Posterior cingulate gyrus (tissue), 11 donors: ENCODE measurements at regions of chr7 and their contacts with region 1.

Region 1: GRCh38 chr7:66493235-66494181 is 135.2 kb upstream of the KCTD7 start:
- DNase-seq: peak; percentile 96 to 100 (median 98)

Region 2: DNA sequence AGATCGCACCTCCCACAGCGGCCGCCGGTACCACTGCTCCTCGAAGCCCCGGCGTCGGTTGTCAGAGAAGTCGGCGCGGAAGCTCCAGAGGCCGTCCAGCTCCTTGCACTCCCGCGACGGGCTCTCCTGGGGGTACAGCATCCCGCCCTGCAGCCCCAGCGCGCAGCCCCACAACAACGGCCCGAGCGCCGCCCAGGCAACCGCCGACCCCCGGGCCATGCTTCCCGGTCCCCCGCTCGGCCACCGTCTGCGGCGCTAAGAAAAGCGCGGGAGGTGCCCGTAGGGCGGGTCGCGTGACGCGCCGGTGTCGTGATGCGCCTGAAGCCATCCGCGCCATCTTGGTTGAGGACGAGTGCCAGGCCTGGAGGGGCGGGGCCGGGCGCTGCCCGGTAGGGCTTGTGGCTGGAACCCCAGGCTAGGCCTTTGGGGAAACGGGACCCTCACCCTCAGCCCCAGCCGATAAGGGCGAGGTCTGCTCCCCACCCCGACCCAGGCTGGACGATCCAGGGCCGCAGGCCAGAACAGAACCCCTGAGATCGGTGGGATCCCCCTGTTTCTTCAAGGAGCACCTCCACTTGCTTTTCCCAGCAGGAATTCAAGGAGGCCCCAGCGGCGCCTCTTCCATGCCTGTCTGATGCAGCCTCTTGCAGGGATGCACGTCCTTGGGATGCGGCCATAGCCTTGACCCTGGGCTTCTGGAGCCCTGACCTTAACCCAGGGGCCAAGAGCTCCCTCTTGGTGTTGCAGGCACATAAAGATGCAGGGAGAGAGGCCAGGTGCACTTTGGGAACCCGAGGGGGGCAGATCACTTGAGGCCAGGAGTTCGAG is 511.3 kb before region 1 on chr7 and contains the start of gene GUSB:
- intact Hi-C with region 1: loop called (anchors 5 kb)
- DNase-seq: peak; percentile 88 to 99 (median 95)

Region 3: DNA sequence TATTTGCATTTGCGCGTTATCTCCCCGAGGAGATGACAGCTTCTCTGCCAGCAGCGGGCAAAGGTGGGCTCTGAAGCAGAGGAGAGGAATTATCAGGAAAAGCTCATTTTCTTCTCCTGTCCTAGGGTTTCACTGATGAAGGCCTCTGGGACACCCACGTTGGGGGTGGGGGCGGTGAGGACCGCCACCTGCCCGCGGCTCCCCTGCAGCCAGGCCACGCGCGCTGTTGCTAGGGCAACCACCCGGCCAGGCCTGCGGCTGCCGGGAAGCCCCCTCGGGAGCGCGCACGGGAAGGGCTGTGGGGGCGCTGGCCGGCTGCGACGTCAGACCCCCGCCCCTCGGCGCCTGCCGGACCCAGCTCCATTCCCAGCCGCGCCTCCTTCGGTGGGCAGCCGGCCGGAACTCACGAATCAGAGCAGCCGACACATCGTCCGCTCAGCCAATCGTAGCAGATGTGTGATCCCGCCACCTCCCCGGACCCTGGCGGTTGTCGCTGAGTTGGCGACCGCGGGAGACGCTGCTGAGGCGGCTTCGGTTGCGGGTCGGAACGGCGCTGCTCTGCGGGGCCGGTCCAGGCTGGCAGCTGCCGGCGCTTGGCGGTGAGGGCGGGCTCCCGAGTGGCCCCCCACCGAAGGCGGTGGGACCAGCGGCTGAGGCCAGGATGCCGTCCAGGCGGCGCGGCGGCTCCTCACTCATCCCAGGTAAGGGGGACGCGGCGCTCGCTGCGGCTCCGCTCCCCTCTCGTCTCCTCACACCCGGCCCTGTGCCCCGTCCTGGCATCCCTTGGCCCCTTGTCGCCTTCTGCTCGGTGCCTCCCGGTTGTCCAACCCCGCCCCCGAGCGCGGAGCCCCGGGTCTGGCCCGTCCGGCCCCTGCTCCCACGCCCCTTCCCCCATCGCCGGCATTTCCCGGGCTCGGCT is 288.4 kb before region 1 on chr7 and contains the start of gene TPST1:
- intact Hi-C with region 1: loop called (anchors 10 kb)
- DNase-seq: peak; percentile 91 to 99 (median 94)

Region 4: GRCh38 chr7:66413379-66414114 is 80.0 kb before region 1 on chr7:
- intact Hi-C with region 1: loop called (anchors 5 kb)
- DNase-seq: peak; percentile 72 to 98 (median 90)

Region 5: GRCh38 chr7:66522518-66522917 is 29.0 kb after region 1 on chr7:
- intact Hi-C with region 1: no loop called
- DNase-seq: peak in 2 of 10 donors; percentile 32 to 61